ENCODE measurements at regions of chr12 and their contacts with region 1.

Region 1: DNA sequence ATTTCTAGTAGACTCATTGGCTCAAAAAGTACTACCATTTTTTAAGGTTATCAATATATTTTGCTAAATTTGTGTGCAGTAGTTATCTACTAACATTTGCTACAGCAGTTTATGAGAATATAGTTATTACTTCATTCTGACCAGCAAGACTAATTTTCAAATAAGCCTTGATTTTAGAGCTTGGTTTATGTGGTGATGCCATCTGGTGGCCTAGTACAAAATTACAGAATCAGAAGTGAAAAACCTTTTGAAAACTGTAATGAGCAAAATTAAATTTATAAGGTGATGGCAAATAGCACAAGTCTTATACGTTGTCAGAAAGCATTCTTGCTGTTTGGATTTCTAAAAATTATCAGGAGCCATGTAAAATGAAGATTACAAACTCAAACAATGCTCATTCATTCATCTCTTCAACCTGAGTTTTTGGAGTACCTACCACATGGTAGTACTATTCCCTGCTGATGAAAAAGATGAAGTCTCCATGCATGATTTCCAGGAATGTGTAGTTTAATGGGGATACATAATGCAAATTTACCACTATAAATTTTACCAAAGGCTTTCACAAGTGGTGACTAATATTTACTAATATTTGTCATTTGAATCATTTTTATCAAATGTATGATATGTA is 51.0 kb downstream of the MAGOHB start:
- DNase-seq: no peak
- H3K4me3 Mint-ChIP-seq: no peak overlapping the region
- H3K27ac Mint-ChIP-seq: no peak overlapping the region
- H3K4me1 Mint-ChIP-seq: no peaks in the 10 kb centered on the region
- H3K27me3 Mint-ChIP-seq: peaks cover 26% of the 10 kb centered on the region

Region 2: DNA sequence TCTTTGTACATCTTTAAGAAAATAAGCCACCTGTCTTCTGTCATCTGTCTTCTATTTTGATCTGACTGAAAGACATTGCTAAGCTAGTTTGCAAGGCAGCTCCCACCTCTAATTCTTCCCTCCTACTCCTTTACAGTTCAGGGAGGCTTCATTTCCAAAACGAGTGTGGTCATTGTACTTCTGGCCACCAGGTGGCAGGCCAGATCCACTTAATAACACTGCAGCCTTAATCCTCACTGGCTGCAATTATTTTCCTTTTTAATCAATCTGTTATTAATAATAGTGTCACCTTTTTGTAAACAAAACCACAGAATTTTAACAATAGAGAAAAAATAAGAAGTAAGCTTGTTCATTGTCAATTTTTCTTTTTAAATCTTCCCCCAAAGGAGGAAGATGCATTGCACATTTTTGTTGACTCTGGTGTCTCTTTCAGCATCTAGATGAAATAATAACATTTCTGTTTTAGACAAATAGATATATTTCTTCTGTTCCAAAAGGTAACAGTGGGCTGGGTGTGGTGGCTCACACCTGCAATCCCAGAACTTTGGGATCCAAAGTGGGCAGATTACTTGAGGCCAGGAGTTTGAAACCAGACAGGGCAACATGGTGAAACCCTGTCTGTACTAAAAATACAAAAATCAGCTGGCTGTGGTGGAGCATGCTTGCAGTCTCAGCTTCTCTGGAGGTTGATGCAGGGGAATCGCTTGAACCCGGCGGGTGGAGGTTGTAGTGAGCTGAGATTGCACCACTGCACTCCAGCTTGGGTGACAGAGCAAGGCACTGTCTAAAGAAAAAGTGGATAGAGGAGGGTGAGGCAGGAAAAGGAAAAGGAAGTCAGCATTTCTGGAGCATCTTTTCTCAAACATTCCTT is 326.4 kb before region 1 on chr12:
- CTCF ChIA-PET with region 1: interaction called, 76 read pairs
- POLR2A ChIA-PET with region 1: no interaction called
- intact Hi-C with region 1: loop called (anchors 1 kb)
- DNase-seq: peak; percentile 47
- H3K4me3 Mint-ChIP-seq: no peak overlapping the region
- H3K27ac Mint-ChIP-seq: no peak overlapping the region
- H3K4me1 Mint-ChIP-seq: no peaks in the 10 kb centered on the region
- H3K27me3 Mint-ChIP-seq: peaks cover 3% of the 10 kb centered on the region

Region 3: DNA sequence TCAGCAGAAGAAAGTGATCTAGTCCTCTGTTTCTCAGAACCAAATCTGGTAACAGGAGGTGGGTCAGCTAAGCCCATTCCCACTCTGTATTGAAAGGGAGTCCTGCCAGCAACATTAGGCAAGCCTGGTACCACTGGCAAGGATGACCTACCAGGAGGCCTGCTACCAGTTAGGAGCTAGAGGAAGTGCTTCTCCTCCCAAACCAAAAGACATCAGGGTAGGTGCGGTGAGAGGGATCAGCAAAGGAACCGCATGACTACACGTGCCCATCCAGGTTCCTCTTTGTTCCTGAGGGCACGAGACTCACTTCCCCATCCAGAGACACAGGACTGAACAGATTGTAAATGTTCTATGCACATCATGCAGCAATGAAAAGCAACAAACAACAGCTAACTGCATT is 155.7 kb before region 1 on chr12:
- CTCF ChIA-PET with region 1: no interaction called
- POLR2A ChIA-PET with region 1: no interaction called
- intact Hi-C with region 1: no loop called
- DNase-seq: no peak
- H3K4me3 Mint-ChIP-seq: no peak overlapping the region
- H3K27ac Mint-ChIP-seq: no peak overlapping the region
- H3K4me1 Mint-ChIP-seq: no peaks in the 10 kb centered on the region
- H3K27me3 Mint-ChIP-seq: peaks cover 11% of the 10 kb centered on the region